B cell (primary cell): ENCODE measurements at regions of chr5 and their contacts with region 1.

Region 1: GRCh38 chr5:160467555-160468362 is 46.1 kb downstream of the PTTG1 start:
- DNase-seq: peak; percentile 87
- ATAC-seq: peak; percentile 85
- H3K4me3 ChIP-seq: peak overlapping the region; percentile 24 to 58 (median 40)
- H3K4me3 Mint-ChIP-seq: peak overlapping the region; percentile 93
- H3K27ac ChIP-seq: peak overlapping the region in 1 of 2 donors; percentile 60
- H3K27ac Mint-ChIP-seq: peak overlapping the region; percentile 93
- H3K4me1 ChIP-seq: peaks cover 48 to 53% of the 10 kb centered on the region in 2 donors
- H3K4me1 Mint-ChIP-seq: peaks cover 60% of the 10 kb centered on the region
- H3K27me3 ChIP-seq: peaks cover 0 to 32% (median 0%) of the 10 kb centered on the region in 4 experiments
- H3K27me3 Mint-ChIP-seq: no peaks in the 10 kb centered on the region
- CTCF ChIP-seq: no peak

Region 2: GRCh38 chr5:160485364-160485969 is 17.7 kb after region 1 on chr5:
- CTCF ChIA-PET with region 1: no interaction called
- POLR2A ChIA-PET with region 1: no interaction called
- intact Hi-C with region 1: no loop called
- DNase-seq: no peak
- ATAC-seq: no peak
- H3K4me3 ChIP-seq: no peak overlapping the region
- H3K4me3 Mint-ChIP-seq: no peak overlapping the region
- H3K27ac ChIP-seq: no peak overlapping the region
- H3K27ac Mint-ChIP-seq: no peak overlapping the region
- H3K4me1 ChIP-seq: no peaks in the 10 kb centered on the region
- H3K4me1 Mint-ChIP-seq: peaks cover 16% of the 10 kb centered on the region
- H3K27me3 ChIP-seq: no peaks in the 10 kb centered on the region
- H3K27me3 Mint-ChIP-seq: no peaks in the 10 kb centered on the region
- CTCF ChIP-seq: no peak

Region 3: GRCh38 chr5:160508780-160509361 is 41.1 kb after region 1 on chr5:
- CTCF ChIA-PET with region 1: interaction called, 9 read pairs
- POLR2A ChIA-PET with region 1: no interaction called
- intact Hi-C with region 1: loop called (anchors 2 kb)
- DNase-seq: peak; percentile 86
- ATAC-seq: peak; percentile 88
- H3K4me3 ChIP-seq: no peak overlapping the region
- H3K4me3 Mint-ChIP-seq: no peak overlapping the region
- H3K27ac ChIP-seq: no peak overlapping the region
- H3K27ac Mint-ChIP-seq: no peak overlapping the region
- H3K4me1 ChIP-seq: peaks cover 12 to 17% of the 10 kb centered on the region in 2 donors
- H3K4me1 Mint-ChIP-seq: peaks cover 28% of the 10 kb centered on the region
- H3K27me3 ChIP-seq: peaks cover 0 to 12% (median 0%) of the 10 kb centered on the region in 4 experiments
- H3K27me3 Mint-ChIP-seq: no peaks in the 10 kb centered on the region
- CTCF ChIP-seq: peak; percentile 86

Region 4: GRCh38 chr5:161001604-161002003 is 533.8 kb after region 1 on chr5:
- CTCF ChIA-PET with region 1: no interaction called
- POLR2A ChIA-PET with region 1: no interaction called
- intact Hi-C with region 1: no loop called
- DNase-seq: no peak
- ATAC-seq: no peak
- H3K4me3 ChIP-seq: no peak overlapping the region
- H3K4me3 Mint-ChIP-seq: no peak overlapping the region
- H3K27ac ChIP-seq: no peak overlapping the region
- H3K27ac Mint-ChIP-seq: no peak overlapping the region
- H3K4me1 ChIP-seq: no peaks in the 10 kb centered on the region
- H3K4me1 Mint-ChIP-seq: no peaks in the 10 kb centered on the region
- H3K27me3 ChIP-seq: no peaks in the 10 kb centered on the region
- H3K27me3 Mint-ChIP-seq: no peaks in the 10 kb centered on the region
- CTCF ChIP-seq: no peak